PC-9 (cell line): ENCODE measurements at regions of chr11 and their contacts with region 1.

Region 1: GRCh38 chr11:61195719-61196118 is 7.6 kb upstream of the PGA3 start:
- DNase-seq: no peak
- H3K4me3 ChIP-seq: no peak overlapping the region
- H3K27ac ChIP-seq: no peak overlapping the region
- H3K4me1 ChIP-seq: no peaks in the 10 kb centered on the region
- H3K27me3 ChIP-seq: peaks cover 91% of the 10 kb centered on the region
- CTCF ChIP-seq: no peak

Region 2: GRCh38 chr11:61004180-61004611 is 191.5 kb before region 1 on chr11:
- CTCF ChIA-PET with region 1: no interaction called
- POLR2A ChIA-PET with region 1: no interaction called
- intact Hi-C with region 1: no loop called
- DNase-seq: no peak
- H3K4me3 ChIP-seq: no peak overlapping the region
- H3K27ac ChIP-seq: no peak overlapping the region
- H3K4me1 ChIP-seq: no peaks in the 10 kb centered on the region
- H3K27me3 ChIP-seq: peaks cover 13% of the 10 kb centered on the region; the same call in 1 of the 2 replicates
- CTCF ChIP-seq: no peak

Region 3: DNA sequence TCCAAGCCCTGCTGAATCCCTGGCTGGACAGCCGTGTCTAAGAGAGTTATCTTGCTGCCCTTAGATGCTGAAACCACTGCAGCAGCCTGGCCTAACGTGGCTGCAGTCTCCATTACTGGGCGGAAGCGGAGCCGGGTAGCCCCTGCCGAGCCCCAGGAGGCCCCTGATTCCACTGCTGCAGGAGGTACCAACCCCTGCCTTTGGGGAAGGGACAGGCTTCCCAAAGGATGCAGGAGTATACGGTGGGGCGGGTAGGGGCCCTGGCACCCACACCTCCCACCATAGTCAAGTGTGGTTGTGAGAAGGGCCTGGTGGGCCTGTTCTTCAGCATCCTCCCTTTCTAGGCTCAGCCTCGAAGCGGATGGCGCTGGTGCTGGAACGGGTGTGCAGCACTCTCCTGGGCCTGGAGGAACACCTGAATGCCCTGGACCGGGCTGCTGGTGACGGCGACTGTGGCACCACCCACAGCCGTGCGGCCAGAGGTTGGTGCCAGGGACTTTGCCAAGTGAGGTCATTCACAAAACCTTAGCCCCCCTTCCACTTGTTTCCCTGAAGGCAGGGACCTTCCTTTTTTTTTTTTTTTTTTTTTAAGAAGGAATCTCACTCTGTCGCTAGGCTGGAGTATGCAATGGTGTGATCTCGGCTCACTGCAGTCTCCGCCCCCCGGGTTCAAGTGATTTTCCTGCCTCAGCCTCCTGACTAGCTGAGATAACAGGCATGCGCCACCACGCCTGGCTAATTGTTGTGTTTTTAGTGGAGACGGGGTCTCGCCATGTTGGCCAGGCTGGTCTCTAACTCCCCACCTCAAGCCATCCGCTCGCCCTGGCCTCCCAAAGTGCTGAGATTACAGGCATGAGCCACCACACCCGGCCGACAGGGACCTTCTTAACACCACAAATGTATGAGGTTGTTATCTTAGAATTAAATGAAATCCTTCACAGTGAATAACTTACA is 148.3 kb after region 1 on chr11:
- CTCF ChIA-PET with region 1: interaction called, 14 read pairs
- POLR2A ChIA-PET with region 1: no interaction called
- intact Hi-C with region 1: no loop called
- DNase-seq: no peak
- H3K4me3 ChIP-seq: no peak overlapping the region
- H3K27ac ChIP-seq: no peak overlapping the region
- H3K4me1 ChIP-seq: no peaks in the 10 kb centered on the region
- H3K27me3 ChIP-seq: no peaks in the 10 kb centered on the region
- CTCF ChIP-seq: no peak